HepG2 (cell line): ENCODE measurements at regions of chr2 and their contacts with region 1.

Region 1: GRCh38 chr2:231696007-231696371 is 12.3 kb upstream of the PTMA start:
- DNase-seq: no peak
- ATAC-seq: peak; percentile 32
- H3K4me3 ChIP-seq: no peak overlapping the region; a peak in 1 of 6 replicates
- H3K27ac ChIP-seq: no peak overlapping the region
- H3K4me1 ChIP-seq: peaks cover 38% of the 10 kb centered on the region
- H3K27me3 ChIP-seq: peaks cover 0 to 10% of the 10 kb centered on the region in 2 experiments; a peak in 1 of 5 replicates
- CTCF ChIP-seq: no peak
- EP300 ChIP-seq: no peak; a peak in 1 of 4 replicates
- POLR2A ChIP-seq: no peak
- RAD21 ChIP-seq: no peak

Region 2: DNA sequence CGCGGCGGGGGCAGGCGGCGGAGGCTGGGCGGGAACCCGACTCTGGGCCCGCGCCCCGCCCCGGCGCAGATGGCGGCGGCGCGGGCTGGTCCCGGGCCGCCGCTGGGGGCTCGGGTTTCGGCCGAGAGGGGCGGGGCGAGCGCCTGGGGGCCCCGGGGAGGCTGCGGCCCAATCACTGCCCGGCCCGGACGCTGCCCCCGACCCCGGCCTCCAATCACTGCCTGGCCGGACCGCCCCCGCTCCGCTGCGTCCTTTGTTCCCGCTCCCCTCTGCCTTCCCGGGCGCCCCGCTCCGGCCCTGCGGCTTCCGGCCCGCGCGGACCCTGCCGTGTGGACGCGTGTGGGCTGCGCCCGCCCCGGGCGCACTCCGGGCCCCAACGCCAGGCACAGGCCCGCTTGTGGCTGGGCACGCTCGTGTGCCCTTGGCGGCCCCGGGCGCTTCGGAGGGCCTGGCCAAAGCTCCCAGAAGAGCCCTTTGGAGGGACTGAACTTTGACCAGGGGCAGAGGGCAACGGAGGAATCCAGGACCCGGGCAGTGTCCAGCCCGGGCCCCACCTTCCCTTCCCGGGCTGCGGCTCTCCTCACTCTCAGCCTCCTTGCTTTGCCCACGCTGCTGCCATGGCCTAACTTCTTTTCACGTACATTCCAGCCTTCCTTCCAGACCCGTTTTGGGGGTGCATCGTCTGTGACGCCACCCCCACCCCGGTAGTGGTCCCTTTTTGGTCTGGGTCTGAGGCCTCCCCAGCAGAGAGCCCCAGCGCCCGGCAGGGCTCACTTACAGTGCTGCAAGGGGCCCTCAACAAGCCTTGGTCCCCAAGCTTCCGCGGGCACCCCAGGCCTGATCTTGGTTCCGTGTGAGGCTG is 14.8 kb before region 1 on chr2:
- CTCF ChIA-PET with region 1: no interaction called
- POLR2A ChIA-PET with region 1: interaction called, 52 read pairs
- in situ Hi-C with region 1: no loop called
- intact Hi-C with region 1: no loop called
- DNase-seq: peak; percentile 87
- ATAC-seq: peak; percentile 83
- H3K4me3 ChIP-seq: peak overlapping the region; percentile 63 to 82 (median 66)
- H3K27ac ChIP-seq: peak overlapping the region; percentile 98
- H3K4me1 ChIP-seq: peaks cover 64% of the 10 kb centered on the region
- H3K27me3 ChIP-seq: peaks cover 0 to 10% of the 10 kb centered on the region in 2 experiments; a peak in 1 of 5 replicates
- CTCF ChIP-seq: peak; percentile 11; the same call in 1 of the 2 replicates
- EP300 ChIP-seq: no peak; a peak in 1 of 4 replicates
- POLR2A ChIP-seq: peak in 1 of 2 experiments; percentile 93; a peak in 2 of 4 replicates
- RAD21 ChIP-seq: peak; percentile 77